ENCODE measurements at regions of chr7 and their contacts with region 1.

Region 1: GRCh38 chr7:87628780-87629569 is 777 bp downstream of the RUNDC3B start:
- DNase-seq: no peak
- H3K4me3 Mint-ChIP-seq: peak overlapping the region; percentile 60
- H3K27ac Mint-ChIP-seq: no peak overlapping the region
- H3K4me1 Mint-ChIP-seq: peaks cover 8% of the 10 kb centered on the region
- H3K27me3 Mint-ChIP-seq: peaks cover 21% of the 10 kb centered on the region

Region 2: GRCh38 chr7:87345166-87345927 is 283.6 kb before region 1 on chr7 and contains the start of gene CROT:
- intact Hi-C with region 1: loop called (anchors 2 kb)
- DNase-seq: peak; percentile 92
- H3K4me3 Mint-ChIP-seq: peak within 1 kb of the TSS; percentile 87
- H3K27ac Mint-ChIP-seq: peak within 1 kb of the TSS; percentile 79
- H3K4me1 Mint-ChIP-seq: peaks cover 38% of the 10 kb centered on the region
- H3K27me3 Mint-ChIP-seq: no peaks in the 10 kb centered on the region
- total RNA-seq, gene CROT: 7.5 and 7.9 TPM in 2 replicates

Region 3: GRCh38 chr7:87574630-87575029 is 54.3 kb before region 1 on chr7:
- intact Hi-C with region 1: no loop called
- DNase-seq: no peak
- H3K4me3 Mint-ChIP-seq: no peak overlapping the region
- H3K27ac Mint-ChIP-seq: no peak overlapping the region
- H3K4me1 Mint-ChIP-seq: peaks cover 6% of the 10 kb centered on the region
- H3K27me3 Mint-ChIP-seq: no peaks in the 10 kb centered on the region

Region 4: DNA sequence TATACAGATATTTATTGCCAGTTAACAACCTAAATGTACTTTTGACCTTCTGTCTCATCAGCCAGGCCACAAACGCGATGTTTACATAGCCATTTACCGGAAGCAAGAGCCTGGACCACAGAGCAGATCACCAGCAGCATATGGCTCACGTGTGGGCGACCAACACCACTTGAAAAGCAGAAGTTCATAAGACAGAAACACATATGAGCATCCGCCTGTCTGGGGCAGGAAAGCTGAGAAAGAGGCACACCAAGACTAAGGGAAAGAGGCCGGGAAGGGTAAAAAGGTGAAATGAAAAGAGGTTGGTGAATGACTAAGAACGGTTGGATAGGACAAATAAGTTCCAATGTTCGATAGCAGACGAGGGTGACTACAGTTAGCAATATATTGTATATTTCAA is 29.6 kb before region 1 on chr7:
- intact Hi-C with region 1: loop called (anchors 1 kb)
- DNase-seq: peak; percentile 12
- H3K4me3 Mint-ChIP-seq: peak overlapping the region; percentile 68
- H3K27ac Mint-ChIP-seq: peak overlapping the region; percentile 5
- H3K4me1 Mint-ChIP-seq: peaks cover 26% of the 10 kb centered on the region
- H3K27me3 Mint-ChIP-seq: peaks cover 38% of the 10 kb centered on the region

Region 5: DNA sequence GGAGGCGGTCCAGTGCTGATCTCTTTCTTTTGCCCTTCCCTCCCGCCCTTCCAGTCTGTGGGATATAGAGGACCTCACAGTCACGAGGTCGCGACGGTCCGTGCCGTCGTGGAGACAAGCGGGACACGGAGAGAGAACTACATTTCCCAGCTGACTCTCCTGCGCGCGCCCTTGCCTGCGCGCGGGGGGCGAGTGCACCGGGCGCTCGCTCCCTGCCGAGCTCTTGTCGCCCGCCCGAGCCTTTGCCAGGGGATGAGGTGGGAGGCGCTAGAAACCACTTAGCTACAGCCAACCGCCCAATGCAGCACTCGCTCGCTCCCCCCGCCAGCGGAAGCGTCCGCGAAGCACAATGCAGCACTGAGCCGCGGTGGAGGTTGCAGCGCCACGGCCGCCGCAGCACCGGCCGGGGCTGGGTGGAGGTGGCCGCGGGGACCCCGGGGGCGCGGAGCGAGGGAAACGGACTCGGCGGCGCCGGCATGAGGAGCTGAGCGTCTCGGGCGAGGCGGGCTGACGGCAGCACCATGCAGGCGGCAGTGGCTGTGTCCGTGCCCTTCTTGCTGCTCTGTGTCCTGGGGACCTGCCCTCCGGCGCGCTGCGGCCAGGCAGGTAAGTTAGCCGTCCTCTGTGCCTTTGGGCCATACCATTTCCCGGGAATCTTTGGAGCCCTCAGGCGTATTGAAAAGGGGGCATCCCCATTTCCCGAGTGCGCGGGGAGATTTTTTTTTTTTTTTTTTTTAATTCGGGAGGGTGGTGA is 305.1 kb after region 1 on chr7 and contains the start of gene ADAM22:
- intact Hi-C with region 1: loop called (anchors 5 kb)
- DNase-seq: peak; percentile 77
- H3K4me3 Mint-ChIP-seq: peak within 1 kb of the TSS; percentile 91
- H3K27ac Mint-ChIP-seq: no peak within 1 kb of the TSS
- H3K4me1 Mint-ChIP-seq: peaks cover 7% of the 10 kb centered on the region
- H3K27me3 Mint-ChIP-seq: peaks cover 31% of the 10 kb centered on the region
- total RNA-seq, gene ADAM22: 3.7 and 4.0 TPM in 2 replicates

Region 6: DNA sequence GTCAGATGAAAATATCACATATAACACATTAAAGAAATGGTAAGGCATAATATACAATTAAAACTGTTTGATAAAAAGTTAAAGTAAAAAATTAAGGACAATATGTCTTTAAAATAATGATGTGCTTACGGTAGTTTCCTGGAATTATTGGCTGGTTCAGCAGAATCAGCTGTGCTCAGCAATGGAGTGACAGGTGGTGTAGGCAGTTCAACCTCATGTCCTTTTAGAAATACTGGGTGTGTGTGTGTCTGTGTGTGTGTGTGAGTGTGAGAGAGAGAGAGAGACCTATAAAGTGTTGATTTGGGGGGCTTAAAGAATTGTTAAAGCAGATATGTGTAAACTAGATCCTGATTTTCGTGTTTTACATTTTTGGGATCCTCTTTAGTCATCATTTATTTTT is 446.2 kb after region 1 on chr7:
- intact Hi-C with region 1: no loop called
- DNase-seq: no peak
- H3K4me3 Mint-ChIP-seq: no peak overlapping the region
- H3K27ac Mint-ChIP-seq: no peak overlapping the region
- H3K4me1 Mint-ChIP-seq: peaks cover 7% of the 10 kb centered on the region
- H3K27me3 Mint-ChIP-seq: no peaks in the 10 kb centered on the region